ENCODE measurements at regions of chr5 and their contacts with region 1.

Region 1: DNA sequence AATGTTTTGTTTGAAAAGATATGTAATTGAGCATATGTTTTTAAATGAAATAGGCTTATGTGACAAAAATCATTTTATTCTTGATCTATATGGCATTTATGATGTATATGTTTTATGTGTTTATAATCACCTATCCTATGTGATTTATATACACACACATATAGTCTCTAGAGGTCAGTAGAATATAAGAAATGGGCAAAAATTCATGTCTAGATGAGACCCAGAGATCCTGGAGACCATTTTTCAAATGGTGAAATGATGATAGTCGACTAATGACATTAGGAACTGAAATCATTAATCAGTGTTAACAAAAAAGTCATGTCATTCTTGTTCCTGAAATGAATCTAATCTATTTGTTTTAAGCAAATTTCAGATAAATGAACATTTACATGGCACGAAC is 709.2 kb upstream of the WWC1 start:
- DNase-seq: no peak
- H3K4me3 ChIP-seq: no peak overlapping the region
- H3K4me3 Mint-ChIP-seq: no peak overlapping the region
- H3K27ac Mint-ChIP-seq: no peak overlapping the region
- H3K4me1 ChIP-seq: no peaks in the 10 kb centered on the region
- H3K4me1 Mint-ChIP-seq: no peaks in the 10 kb centered on the region
- H3K27me3 ChIP-seq: no peaks in the 10 kb centered on the region
- H3K27me3 Mint-ChIP-seq: peaks cover 26% of the 10 kb centered on the region
- CTCF ChIP-seq: no peak

Region 2: GRCh38 chr5:168047043-168047668 is 464.9 kb after region 1 on chr5:
- CTCF ChIA-PET with region 1: no interaction called
- POLR2A ChIA-PET with region 1: no interaction called
- intact Hi-C with region 1: loop called (anchors 1 kb)
- DNase-seq: peak; percentile 59 to 68
- H3K4me3 ChIP-seq: no peak overlapping the region
- H3K4me3 Mint-ChIP-seq: no peak overlapping the region
- H3K27ac Mint-ChIP-seq: no peak overlapping the region
- H3K4me1 ChIP-seq: no peaks in the 10 kb centered on the region; the same call in 1 of the 2 replicates
- H3K4me1 Mint-ChIP-seq: no peaks in the 10 kb centered on the region
- H3K27me3 ChIP-seq: no peaks in the 10 kb centered on the region
- H3K27me3 Mint-ChIP-seq: peaks cover 21% of the 10 kb centered on the region
- CTCF ChIP-seq: peak; percentile 66 to 71

Measured in Caco-2 (cell line).